T-cell (primary cell): ENCODE measurements at regions of chr12 and their contacts with region 1.

Region 1: GRCh38 chr12:47651368-47652254 is 54.2 kb downstream of the RPAP3 start:
- DNase-seq: peak in 33 of 35 experiments; percentile 8 to 73 (median 32)
- ATAC-seq: peak; percentile 72 to 90 (median 86)
- H3K4me3 ChIP-seq: no peak overlapping the region
- H3K4me3 Mint-ChIP-seq: peak overlapping the region; percentile 56 to 68 (median 61)
- H3K27ac ChIP-seq: no peak overlapping the region
- H3K27ac Mint-ChIP-seq: peak overlapping the region; percentile 4 to 16
- H3K4me1 ChIP-seq: peaks cover 0 to 9% of the 10 kb centered on the region in 2 experiments
- H3K4me1 Mint-ChIP-seq: peaks cover 14 to 17% (median 15%) of the 10 kb centered on the region in 3 donors
- H3K27me3 ChIP-seq: no peaks in the 10 kb centered on the region
- H3K27me3 Mint-ChIP-seq: no peaks in the 10 kb centered on the region

Region 2: GRCh38 chr12:47686645-47687240 is 35.1 kb after region 1 on chr12:
- CTCF ChIA-PET with region 1: interaction called, 4 to 11 read pairs
- POLR2A ChIA-PET with region 1: interaction called in 1 of 2 experiments, 4 read pairs
- DNase-seq: peak in 11 of 35 experiments; percentile 8 to 63 (median 19)
- ATAC-seq: peak in 2 of 4 experiments; percentile 57 to 69
- H3K4me3 ChIP-seq: no peak overlapping the region
- H3K4me3 Mint-ChIP-seq: no peak overlapping the region
- H3K27ac ChIP-seq: no peak overlapping the region
- H3K27ac Mint-ChIP-seq: no peak overlapping the region
- H3K4me1 ChIP-seq: peaks cover 0 to 3% of the 10 kb centered on the region in 2 experiments
- H3K4me1 Mint-ChIP-seq: peaks cover 4 to 9% (median 7%) of the 10 kb centered on the region in 3 donors
- H3K27me3 ChIP-seq: no peaks in the 10 kb centered on the region
- H3K27me3 Mint-ChIP-seq: no peaks in the 10 kb centered on the region

Region 3: DNA sequence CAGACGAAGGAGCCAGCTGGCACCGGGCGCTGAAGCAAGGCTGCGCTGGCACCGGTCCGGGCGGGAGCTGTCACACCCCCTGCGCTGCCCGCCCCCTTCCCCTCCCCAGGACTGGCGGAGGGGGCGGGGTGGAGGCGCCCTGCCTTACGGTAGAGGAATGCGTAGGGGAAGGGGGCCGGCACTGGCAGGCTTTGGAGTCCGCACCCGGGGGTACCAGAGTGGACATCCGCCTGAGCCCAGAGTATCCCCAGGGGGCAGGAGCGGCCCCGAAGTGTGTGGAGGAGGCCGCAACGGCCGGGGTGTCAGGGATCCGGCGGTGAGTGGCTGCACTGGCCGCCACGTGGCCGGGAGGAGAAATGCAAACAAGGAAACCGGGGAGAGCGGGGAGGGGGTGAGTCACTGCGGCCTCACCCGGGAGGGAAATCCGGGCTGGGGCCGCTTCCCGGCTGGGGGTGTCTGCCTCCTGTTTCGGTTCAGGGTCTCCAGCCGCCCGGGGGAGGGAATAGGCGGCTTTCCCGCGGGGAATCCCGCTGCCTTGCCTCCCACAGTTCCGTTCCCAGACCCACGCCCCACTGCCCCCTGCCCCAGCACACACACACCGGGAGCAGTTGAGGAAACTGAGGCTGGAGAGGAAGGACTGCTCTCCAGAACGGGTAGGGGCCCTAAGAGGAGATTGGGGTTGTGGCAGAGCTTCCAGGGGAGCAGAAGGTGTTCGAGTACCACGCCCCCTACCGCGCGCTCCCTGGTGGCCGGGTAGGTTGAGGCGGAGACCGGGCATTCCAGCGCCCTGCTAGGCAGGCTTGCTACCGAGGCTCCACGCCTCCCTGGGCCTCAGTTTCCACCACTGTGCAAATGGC is 107.5 kb after region 1 on chr12 and contains the start of gene RAPGEF3:
- CTCF ChIA-PET with region 1: no interaction called
- POLR2A ChIA-PET with region 1: no interaction called
- DNase-seq: peak in 34 of 35 experiments; percentile 20 to 75 (median 48)
- ATAC-seq: peak; percentile 86 to 91 (median 87)
- H3K4me3 ChIP-seq: peak within 1 kb of the TSS; percentile 58 to 68
- H3K4me3 Mint-ChIP-seq: peak within 1 kb of the TSS; percentile 71 to 77 (median 73)
- H3K27ac ChIP-seq: no peak within 1 kb of the TSS
- H3K27ac Mint-ChIP-seq: peak within 1 kb of the TSS in 1 of 2 donors; percentile 34
- H3K4me1 ChIP-seq: peaks cover 0 to 38% of the 10 kb centered on the region in 2 experiments
- H3K4me1 Mint-ChIP-seq: peaks cover 24 to 33% (median 24%) of the 10 kb centered on the region in 3 donors
- H3K27me3 ChIP-seq: peaks cover 0 to 16% of the 10 kb centered on the region in 2 experiments
- H3K27me3 Mint-ChIP-seq: no peaks in the 10 kb centered on the region
- total RNA-seq, gene RAPGEF3: 0.25 to 0.99 (median 0.82) TPM